ENCODE measurements at regions of chr18 and their contacts with region 1.

Region 1: DNA sequence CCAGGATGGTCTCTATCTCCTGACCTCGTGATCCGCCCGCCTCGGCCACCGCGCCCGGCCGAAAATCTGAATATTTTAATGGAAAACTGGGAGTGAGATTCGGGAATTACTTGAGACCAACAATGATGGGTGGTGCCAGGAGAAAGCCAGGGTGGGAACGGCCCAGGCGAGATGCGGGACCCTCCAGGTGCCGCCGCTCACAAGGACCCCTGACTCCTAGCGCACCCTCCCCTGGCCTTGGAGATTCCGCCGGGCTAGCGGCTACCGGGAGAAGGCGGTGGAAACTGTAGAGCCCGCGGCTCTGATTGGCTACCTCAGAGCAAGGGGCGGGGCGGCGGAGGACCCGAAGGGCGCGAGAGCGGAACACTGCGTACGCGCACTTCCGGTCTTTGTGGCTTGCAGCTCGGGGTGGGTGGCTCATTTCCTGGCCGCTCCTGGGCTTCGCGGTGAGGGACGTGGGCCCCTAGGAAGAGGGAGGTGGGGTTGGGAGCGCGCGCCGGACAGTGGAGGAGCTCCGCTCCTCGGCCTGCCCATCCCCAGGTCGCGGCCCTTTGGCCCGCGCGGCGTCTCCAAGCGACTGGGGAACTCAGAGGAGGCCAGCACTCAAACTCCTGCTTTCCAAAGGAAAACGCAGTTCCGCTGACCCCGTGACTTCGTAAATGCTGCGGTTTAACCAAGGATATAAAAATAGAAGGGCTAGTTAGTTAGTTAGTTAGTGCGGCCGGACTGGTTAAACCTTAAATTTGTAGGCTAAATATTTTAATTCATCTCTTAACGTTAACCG is at the start of gene ZNF397:
- DNase-seq: peak; percentile 99
- H3K4me3 Mint-ChIP-seq: peak within 1 kb of the TSS; percentile 96
- H3K27ac Mint-ChIP-seq: peak within 1 kb of the TSS; percentile 98
- H3K4me1 Mint-ChIP-seq: peaks cover 12% of the 10 kb centered on the region
- H3K27me3 Mint-ChIP-seq: no peaks in the 10 kb centered on the region
- total RNA-seq, gene ZNF397: 19.2 and 22.6 TPM in 2 replicates

Region 2: GRCh38 chr18:34857320-34857719 is 383.5 kb before region 1 on chr18:
- intact Hi-C with region 1: loop called (anchors 1 kb)
- DNase-seq: no peak
- H3K4me3 Mint-ChIP-seq: no peak overlapping the region
- H3K27ac Mint-ChIP-seq: no peak overlapping the region
- H3K4me1 Mint-ChIP-seq: peaks cover 7% of the 10 kb centered on the region
- H3K27me3 Mint-ChIP-seq: peaks cover 32% of the 10 kb centered on the region

Region 3: GRCh38 chr18:35005963-35006577 is 234.8 kb before region 1 on chr18:
- intact Hi-C with region 1: loop called (anchors 5 kb)
- DNase-seq: peak; percentile 80
- H3K4me3 Mint-ChIP-seq: no peak overlapping the region
- H3K27ac Mint-ChIP-seq: no peak overlapping the region
- H3K4me1 Mint-ChIP-seq: no peaks in the 10 kb centered on the region
- H3K27me3 Mint-ChIP-seq: peaks cover 6% of the 10 kb centered on the region

Region 4: DNA sequence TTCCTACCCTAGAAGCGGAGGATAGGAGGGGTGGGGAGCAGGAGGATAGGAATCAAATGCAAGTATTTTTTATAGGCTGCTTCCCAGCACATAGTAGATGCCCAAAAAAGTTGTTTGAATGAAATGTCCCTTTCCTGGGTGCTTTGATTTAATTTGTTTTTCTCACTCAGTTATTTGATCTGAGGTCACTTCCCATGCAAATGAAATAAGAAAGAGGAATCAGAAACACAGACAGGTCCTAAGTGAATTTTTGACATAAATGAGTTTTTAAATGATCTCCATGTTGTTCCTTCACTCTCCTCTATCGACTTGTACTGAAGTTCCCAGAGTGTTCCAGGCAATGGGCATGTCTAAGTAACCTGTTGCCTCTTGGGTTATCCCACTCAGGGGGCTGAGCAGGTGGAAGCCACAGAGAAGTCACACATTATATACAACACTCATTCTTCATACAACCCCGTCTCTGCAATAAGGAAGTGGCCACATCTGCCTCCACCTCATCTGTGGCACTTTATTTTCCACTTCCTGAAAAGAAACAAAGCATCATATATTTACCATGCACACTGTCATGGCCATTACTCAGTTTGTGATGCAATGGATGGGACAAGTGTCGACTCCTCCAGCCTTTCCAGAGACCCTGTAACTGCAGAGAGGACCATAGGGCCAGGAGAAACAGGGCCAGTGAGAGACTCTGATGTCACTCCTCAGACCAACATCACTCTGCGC is 82.0 kb before region 1 on chr18:
- intact Hi-C with region 1: loop called (anchors 1 kb)
- DNase-seq: peak; percentile 77
- H3K4me3 Mint-ChIP-seq: peak overlapping the region; percentile 30
- H3K27ac Mint-ChIP-seq: peak overlapping the region; percentile 88
- H3K4me1 Mint-ChIP-seq: peaks cover 24% of the 10 kb centered on the region
- H3K27me3 Mint-ChIP-seq: no peaks in the 10 kb centered on the region

Region 5: GRCh38 chr18:35343936-35344735 is 103.3 kb after region 1 on chr18 and contains the start of gene ZNF24:
- intact Hi-C with region 1: loop called (anchors 1 kb)
- DNase-seq: peak; percentile 98
- H3K4me3 Mint-ChIP-seq: peak within 1 kb of the TSS; percentile 100
- H3K27ac Mint-ChIP-seq: peak within 1 kb of the TSS; percentile 94
- H3K4me1 Mint-ChIP-seq: peaks cover 33% of the 10 kb centered on the region
- H3K27me3 Mint-ChIP-seq: peaks cover 1% of the 10 kb centered on the region
- total RNA-seq, gene ZNF24: 53.9 and 57.8 TPM in 2 replicates

Region 6: GRCh38 chr18:35616664-35617423 is 376.0 kb after region 1 on chr18:
- intact Hi-C with region 1: loop called (anchors 1 kb)
- DNase-seq: peak; percentile 85
- H3K4me3 Mint-ChIP-seq: no peak overlapping the region
- H3K27ac Mint-ChIP-seq: no peak overlapping the region
- H3K4me1 Mint-ChIP-seq: peaks cover 2% of the 10 kb centered on the region
- H3K27me3 Mint-ChIP-seq: no peaks in the 10 kb centered on the region